ENCODE measurements at regions of chr19 and their contacts with region 1.

Region 1: DNA sequence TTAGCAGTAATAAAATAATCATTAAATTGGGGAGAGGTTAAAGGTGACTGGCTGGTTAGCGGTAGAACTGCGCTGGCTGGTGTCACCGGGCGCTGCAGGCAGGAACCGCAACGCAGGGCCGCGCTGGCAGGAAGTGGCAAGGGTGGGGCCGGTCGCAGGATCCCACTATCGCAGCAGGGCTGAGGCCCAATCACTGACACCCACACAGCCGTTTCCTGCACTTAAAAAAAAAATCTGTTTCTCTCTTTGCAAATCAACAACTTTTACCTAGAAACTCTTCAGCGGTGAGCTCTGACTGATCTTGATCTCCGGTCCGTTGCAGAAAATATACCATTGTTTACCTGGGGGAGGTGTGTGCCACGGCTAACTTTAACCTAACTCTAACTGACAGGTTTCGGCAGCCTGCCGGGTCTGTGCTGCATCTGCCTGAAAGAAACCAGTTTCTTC is 46.9 kb downstream of the KLF2 start:
- DNase-seq: peak; percentile 65 to 88 (median 71)
- ATAC-seq: peak in 3 of 4 donors; percentile 47 to 79 (median 52)
- H3K4me3 ChIP-seq: peak overlapping the region in 2 of 12 donors; percentile 16 to 21
- H3K27ac ChIP-seq: peak overlapping the region in 11 of 12 donors; percentile 2 to 87 (median 39)
- H3K4me1 ChIP-seq: peaks cover 0 to 90% (median 40%) of the 10 kb centered on the region in 12 donors
- H3K27me3 ChIP-seq: no peaks in the 10 kb centered on the region
- CTCF ChIP-seq: no peak
- POLR2A ChIP-seq: no peak

Region 2: GRCh38 chr19:16235811-16236652 is 135.5 kb before region 1 on chr19:
- intact Hi-C with region 1: loop called in 1 of 10 experiments (anchors 5 kb)
- DNase-seq: peak in 1 of 5 donors; percentile 21
- ATAC-seq: no peak
- H3K4me3 ChIP-seq: no peak overlapping the region
- H3K27ac ChIP-seq: peak overlapping the region in 1 of 12 donors; percentile 37
- H3K4me1 ChIP-seq: peaks cover 0 to 23% (median 0%) of the 10 kb centered on the region in 12 donors
- H3K27me3 ChIP-seq: no peaks in the 10 kb centered on the region
- CTCF ChIP-seq: no peak
- POLR2A ChIP-seq: no peak

Measured in heart left ventricle (tissue), 16 donors.